ENCODE measurements at regions of chr15 and their contacts with region 1.

Region 1: DNA sequence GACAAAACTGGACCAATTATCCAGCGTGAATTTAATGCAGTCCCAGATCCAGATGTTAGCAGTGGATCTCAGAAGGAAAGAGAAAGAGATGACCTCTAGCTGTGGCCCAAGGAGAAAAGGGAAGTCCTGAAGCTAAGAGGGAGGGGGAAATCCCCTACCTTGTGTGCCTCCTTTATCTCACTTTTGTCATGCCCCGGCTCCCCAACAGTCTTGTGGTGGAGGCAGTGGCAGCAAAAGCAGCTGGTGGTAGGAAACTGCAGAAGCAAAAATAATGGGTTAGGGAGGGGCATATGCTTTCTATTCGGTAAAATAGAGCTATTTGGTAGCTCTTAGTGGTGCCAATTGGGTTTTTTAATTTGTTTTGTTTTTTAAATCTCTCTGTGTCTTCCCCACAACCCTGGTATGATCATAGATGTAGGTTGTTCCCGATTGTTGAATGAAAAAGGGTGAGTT is 56.5 kb downstream of the MCTP2 start:
- DNase-seq: peak; percentile 91
- ATAC-seq: peak; percentile 92
- H3K4me3 ChIP-seq: peak overlapping the region; percentile 2 to 56 (median 28)
- H3K4me3 Mint-ChIP-seq: peak overlapping the region; percentile 84
- H3K27ac ChIP-seq: peak overlapping the region; percentile 90 to 93
- H3K27ac Mint-ChIP-seq: peak overlapping the region; percentile 90
- H3K4me1 ChIP-seq: peaks cover 65 to 72% of the 10 kb centered on the region in 2 donors
- H3K4me1 Mint-ChIP-seq: peaks cover 72% of the 10 kb centered on the region
- H3K27me3 ChIP-seq: no peaks in the 10 kb centered on the region
- H3K27me3 Mint-ChIP-seq: no peaks in the 10 kb centered on the region
- CTCF ChIP-seq: no peak

Region 2: DNA sequence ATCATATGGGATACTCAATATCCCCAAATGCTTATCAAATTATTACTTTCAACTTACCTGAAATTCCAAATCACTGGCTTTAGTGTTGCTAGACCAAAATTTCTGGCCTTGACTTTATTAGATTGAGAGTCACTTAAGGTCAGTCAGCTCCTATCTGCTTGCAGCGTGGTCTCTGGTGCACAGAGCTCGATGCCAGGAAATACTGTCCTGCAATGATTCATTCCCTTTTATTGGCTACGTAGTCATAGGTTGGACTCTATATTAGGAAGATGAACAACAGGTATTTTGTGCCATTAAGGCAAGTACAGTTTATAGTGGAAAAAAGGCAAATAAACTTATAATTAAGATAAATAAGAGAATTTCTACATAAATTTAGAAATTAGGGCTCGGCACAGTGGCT is 435.1 kb before region 1 on chr15:
- CTCF ChIA-PET with region 1: no interaction called
- POLR2A ChIA-PET with region 1: no interaction called
- intact Hi-C with region 1: no loop called
- DNase-seq: no peak
- ATAC-seq: no peak
- H3K4me3 ChIP-seq: no peak overlapping the region
- H3K4me3 Mint-ChIP-seq: no peak overlapping the region
- H3K27ac ChIP-seq: no peak overlapping the region
- H3K27ac Mint-ChIP-seq: no peak overlapping the region
- H3K4me1 ChIP-seq: no peaks in the 10 kb centered on the region
- H3K4me1 Mint-ChIP-seq: no peaks in the 10 kb centered on the region
- H3K27me3 ChIP-seq: no peaks in the 10 kb centered on the region
- H3K27me3 Mint-ChIP-seq: no peaks in the 10 kb centered on the region
- CTCF ChIP-seq: no peak

Region 3: DNA sequence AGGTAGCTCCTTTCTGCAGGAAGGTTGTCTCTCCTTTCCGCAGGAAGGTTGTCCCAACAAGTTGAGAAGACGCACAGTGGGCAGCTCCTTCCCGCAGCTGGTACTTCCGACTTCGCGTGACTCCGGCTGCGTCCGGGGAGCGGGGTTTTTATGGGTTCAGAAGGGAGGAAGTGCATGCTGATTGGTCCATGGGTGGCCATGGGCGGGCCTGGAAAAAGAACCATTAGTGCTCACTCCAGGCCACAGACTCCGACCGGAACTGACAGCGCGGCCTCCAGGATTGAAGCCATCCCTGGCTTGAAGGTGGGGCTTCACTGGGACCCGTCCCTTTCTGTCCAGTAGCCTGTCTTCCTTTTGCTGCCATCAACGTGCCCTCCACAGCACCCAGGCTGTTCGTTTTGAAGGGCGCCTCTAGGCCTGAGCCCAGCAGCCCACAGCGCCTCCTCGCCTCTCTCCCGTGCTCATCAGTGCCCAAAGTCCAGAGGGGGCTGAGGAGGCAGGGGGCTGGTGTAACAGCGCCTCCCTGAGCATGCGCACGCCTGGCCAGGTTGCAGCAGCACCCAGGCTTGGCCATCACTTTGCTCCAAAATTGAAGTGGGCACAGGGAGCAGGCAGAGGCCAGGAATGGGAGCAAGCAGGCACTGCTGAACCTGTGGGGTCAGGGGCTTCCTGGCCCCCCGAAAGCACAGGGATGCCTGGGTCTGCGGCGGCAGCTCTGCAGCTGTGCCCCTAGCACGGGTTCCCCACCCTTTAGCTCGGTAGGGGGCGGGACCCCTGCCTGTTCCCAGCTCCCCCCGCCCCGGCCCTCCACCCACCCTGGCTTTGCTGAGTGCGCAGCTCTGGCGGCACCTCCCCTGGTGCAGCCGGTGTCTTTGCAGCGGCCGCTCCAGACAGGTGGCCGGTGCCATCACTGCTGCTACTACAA is 387.1 kb before region 1 on chr15:
- CTCF ChIA-PET with region 1: no interaction called
- POLR2A ChIA-PET with region 1: no interaction called
- intact Hi-C with region 1: no loop called
- DNase-seq: no peak
- ATAC-seq: no peak
- H3K4me3 ChIP-seq: no peak overlapping the region
- H3K4me3 Mint-ChIP-seq: no peak overlapping the region
- H3K27ac ChIP-seq: no peak overlapping the region
- H3K27ac Mint-ChIP-seq: no peak overlapping the region
- H3K4me1 ChIP-seq: no peaks in the 10 kb centered on the region
- H3K4me1 Mint-ChIP-seq: no peaks in the 10 kb centered on the region
- H3K27me3 ChIP-seq: no peaks in the 10 kb centered on the region
- H3K27me3 Mint-ChIP-seq: peaks cover 3% of the 10 kb centered on the region
- CTCF ChIP-seq: no peak

Region 4: GRCh38 chr15:94230956-94231722 is 56.7 kb before region 1 on chr15 and contains the start of gene MCTP2:
- CTCF ChIA-PET with region 1: interaction called, 47 read pairs
- POLR2A ChIA-PET with region 1: interaction called, 22 read pairs
- intact Hi-C with region 1: loop called (anchors 1 kb)
- DNase-seq: peak; percentile 91
- ATAC-seq: peak; percentile 87
- H3K4me3 ChIP-seq: peak within 1 kb of the TSS; percentile 70 to 96 (median 80)
- H3K4me3 Mint-ChIP-seq: peak within 1 kb of the TSS; percentile 95
- H3K27ac ChIP-seq: peak within 1 kb of the TSS; percentile 88 to 90
- H3K27ac Mint-ChIP-seq: peak within 1 kb of the TSS; percentile 93
- H3K4me1 ChIP-seq: peaks cover 53 to 59% of the 10 kb centered on the region in 2 donors
- H3K4me1 Mint-ChIP-seq: peaks cover 68% of the 10 kb centered on the region
- H3K27me3 ChIP-seq: no peaks in the 10 kb centered on the region
- H3K27me3 Mint-ChIP-seq: no peaks in the 10 kb centered on the region
- CTCF ChIP-seq: peak; percentile 24
- total RNA-seq, gene MCTP2: 64.8 and 68.5 TPM in 2 replicates

Region 5: GRCh38 chr15:94263341-94264273 is 24.2 kb before region 1 on chr15:
- CTCF ChIA-PET with region 1: interaction called, 10 read pairs
- POLR2A ChIA-PET with region 1: interaction called, 7 read pairs
- intact Hi-C with region 1: loop called (anchors 1 kb)
- DNase-seq: peak; percentile 37
- ATAC-seq: peak; percentile 32
- H3K4me3 ChIP-seq: no peak overlapping the region
- H3K4me3 Mint-ChIP-seq: peak overlapping the region; percentile 56
- H3K27ac ChIP-seq: peak overlapping the region; percentile 14 to 55
- H3K27ac Mint-ChIP-seq: peak overlapping the region; percentile 90
- H3K4me1 ChIP-seq: peaks cover 62 to 67% of the 10 kb centered on the region in 2 donors
- H3K4me1 Mint-ChIP-seq: peaks cover 71% of the 10 kb centered on the region
- H3K27me3 ChIP-seq: no peaks in the 10 kb centered on the region
- H3K27me3 Mint-ChIP-seq: no peaks in the 10 kb centered on the region
- CTCF ChIP-seq: no peak

Region 6: DNA sequence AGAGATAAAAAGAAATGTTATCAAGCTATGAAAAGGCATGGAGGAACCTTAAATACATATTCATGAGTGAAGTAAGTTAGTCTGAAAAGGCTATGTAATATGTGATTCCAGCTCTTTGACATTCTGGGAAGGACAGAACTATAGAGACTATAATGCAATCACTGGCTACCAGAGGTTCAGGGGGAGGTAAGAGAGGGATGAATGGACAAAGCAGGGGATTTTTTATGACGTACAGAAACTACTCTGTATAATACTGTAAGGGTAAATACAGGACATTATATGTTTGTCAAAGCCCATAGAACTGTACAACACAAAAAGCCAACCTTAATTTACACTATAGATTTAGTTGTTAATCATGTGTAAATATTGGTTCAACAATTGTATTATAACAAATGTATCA is 10.3 kb before region 1 on chr15:
- CTCF ChIA-PET with region 1: interaction called, 15 read pairs
- POLR2A ChIA-PET with region 1: no interaction called
- intact Hi-C with region 1: loop called (anchors 1 kb)
- DNase-seq: no peak
- ATAC-seq: no peak
- H3K4me3 ChIP-seq: no peak overlapping the region
- H3K4me3 Mint-ChIP-seq: no peak overlapping the region
- H3K27ac ChIP-seq: no peak overlapping the region
- H3K27ac Mint-ChIP-seq: no peak overlapping the region
- H3K4me1 ChIP-seq: peaks cover 23 to 26% of the 10 kb centered on the region in 2 donors
- H3K4me1 Mint-ChIP-seq: peaks cover 53% of the 10 kb centered on the region
- H3K27me3 ChIP-seq: no peaks in the 10 kb centered on the region
- H3K27me3 Mint-ChIP-seq: no peaks in the 10 kb centered on the region
- CTCF ChIP-seq: no peak

Measured in B cell (primary cell).